ENCODE measurements at regions of chr20 and their contacts with region 1.

Region 1: GRCh38 chr20:37527638-37528441 is at the start of gene BLCAP:
- DNase-seq: peak; percentile 69
- ATAC-seq: peak; percentile 92
- H3K4me3 ChIP-seq: peak within 1 kb of the TSS; percentile 89
- H3K27ac ChIP-seq: peak within 1 kb of the TSS; percentile 100
- H3K4me1 ChIP-seq: peaks cover 16% of the 10 kb centered on the region
- H3K27me3 ChIP-seq: no peaks in the 10 kb centered on the region
- CTCF ChIP-seq: no peak
- EP300 ChIP-seq: no peak
- POLR2A ChIP-seq: peak; percentile 98
- RAD21 ChIP-seq: no peak
- polyA plus RNA-seq, gene BLCAP: 24.6 to 37.7 TPM

Region 2: GRCh38 chr20:37392421-37393178 is 135.2 kb before region 1 on chr20:
- CTCF ChIA-PET with region 1: interaction called, 3 read pairs
- POLR2A ChIA-PET with region 1: no interaction called
- RAD21 ChIA-PET with region 1: no interaction called
- SMC1A ChIA-PET with region 1: interaction called, 3 read pairs
- in situ Hi-C with region 1: loop called (anchors 5 kb)
- intact Hi-C with region 1: no loop called
- DNase-seq: no peak
- ATAC-seq: peak; percentile 63
- H3K4me3 ChIP-seq: no peak overlapping the region
- H3K27ac ChIP-seq: no peak overlapping the region
- H3K4me1 ChIP-seq: no peaks in the 10 kb centered on the region
- H3K27me3 ChIP-seq: no peaks in the 10 kb centered on the region
- CTCF ChIP-seq: peak; percentile 25 to 46 (median 31); a peak in 5 of 6 replicates
- EP300 ChIP-seq: no peak
- POLR2A ChIP-seq: 0 out of 2 replicates have a peak, but pooled peaks have one; percentile 19
- RAD21 ChIP-seq: peak; percentile 32; the same call in 1 of the 2 replicates

Region 3: DNA sequence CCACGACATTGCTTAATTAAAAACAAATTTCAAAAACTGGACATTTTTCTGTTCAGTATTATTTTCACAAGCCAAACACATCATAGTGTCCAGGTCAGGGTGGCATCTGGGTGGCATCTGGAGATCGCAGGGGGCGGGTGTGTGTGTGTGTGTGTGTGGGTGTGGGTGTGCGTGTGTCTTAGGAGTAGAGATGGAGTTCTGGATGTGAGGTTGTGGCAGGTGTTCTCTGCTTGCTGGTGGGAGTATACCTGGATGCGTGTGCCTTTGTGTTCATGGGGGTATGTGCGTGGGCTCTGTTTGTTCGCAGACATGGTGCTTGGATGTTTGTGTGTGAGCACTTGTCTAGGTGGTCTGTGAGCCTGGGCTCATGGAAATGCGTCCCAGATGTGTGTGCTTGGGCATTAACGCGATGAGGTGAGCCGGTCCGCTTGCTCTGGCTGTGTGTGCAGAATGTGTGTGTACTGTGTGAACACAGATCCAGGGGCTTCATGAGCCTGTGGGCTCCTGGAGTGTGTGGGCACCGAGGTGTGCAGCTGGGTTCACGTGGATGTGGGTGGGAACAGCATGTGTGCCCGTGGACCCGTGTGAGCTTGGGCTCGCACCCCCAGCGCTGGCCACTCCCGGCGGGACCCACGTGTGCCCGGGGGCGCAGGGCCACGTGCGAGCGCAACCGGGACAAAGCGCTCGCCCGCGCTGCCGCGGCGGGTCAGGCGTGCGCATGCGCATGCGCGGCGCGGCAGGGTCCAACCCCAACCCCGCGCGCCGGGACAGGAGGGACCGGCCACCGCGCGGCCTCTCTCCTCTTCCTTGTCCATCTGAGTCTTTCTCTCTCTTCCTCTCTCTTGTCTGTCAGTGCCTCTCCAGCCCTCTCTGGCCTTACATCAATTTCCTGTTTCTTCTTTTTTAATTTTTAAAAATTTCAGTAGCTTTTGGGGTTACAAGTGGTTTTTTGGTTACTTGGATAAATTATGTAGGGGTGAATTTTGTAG is 121.5 kb before region 1 on chr20:
- CTCF ChIA-PET with region 1: interaction called, 5 read pairs
- POLR2A ChIA-PET with region 1: no interaction called
- RAD21 ChIA-PET with region 1: no interaction called
- SMC1A ChIA-PET with region 1: no interaction called
- in situ Hi-C with region 1: no loop called
- intact Hi-C with region 1: loop called (anchors 2 kb)
- DNase-seq: no peak
- ATAC-seq: peak; percentile 68
- H3K4me3 ChIP-seq: peak overlapping the region; percentile 41; the same call in 1 of the 2 replicates
- H3K27ac ChIP-seq: no peak overlapping the region
- H3K4me1 ChIP-seq: peaks cover 23% of the 10 kb centered on the region
- H3K27me3 ChIP-seq: no peaks in the 10 kb centered on the region
- CTCF ChIP-seq: no peak
- EP300 ChIP-seq: no peak
- POLR2A ChIP-seq: peak; percentile 78
- RAD21 ChIP-seq: no peak

Region 4: DNA sequence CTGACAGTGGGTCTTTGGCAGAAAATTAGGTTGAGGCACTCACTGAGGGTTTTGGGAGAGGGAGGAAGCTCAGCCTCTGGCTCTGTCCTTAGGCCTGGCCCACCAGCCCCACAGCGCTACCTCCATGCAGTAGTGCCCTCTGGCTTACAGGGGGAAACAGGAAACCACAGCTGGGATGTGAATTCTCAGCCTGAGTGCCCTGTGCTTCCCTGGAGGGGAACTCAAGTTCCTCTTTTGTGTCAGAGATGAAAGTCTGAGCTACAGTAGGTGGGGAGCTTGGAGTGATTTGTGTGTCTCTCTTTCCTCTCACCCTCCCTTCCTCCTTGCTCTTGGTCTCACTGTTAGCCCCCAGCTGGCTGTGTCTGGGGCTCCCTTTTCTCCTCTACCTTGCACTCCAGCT is 48.0 kb after region 1 on chr20:
- CTCF ChIA-PET with region 1: no interaction called
- POLR2A ChIA-PET with region 1: no interaction called
- RAD21 ChIA-PET with region 1: no interaction called
- SMC1A ChIA-PET with region 1: no interaction called
- in situ Hi-C with region 1: no loop called
- intact Hi-C with region 1: no loop called
- DNase-seq: peak; percentile 36
- ATAC-seq: peak; percentile 86
- H3K4me3 ChIP-seq: no peak overlapping the region
- H3K27ac ChIP-seq: no peak overlapping the region
- H3K4me1 ChIP-seq: peaks cover 13% of the 10 kb centered on the region
- H3K27me3 ChIP-seq: no peaks in the 10 kb centered on the region; a peak in 1 of 4 replicates
- CTCF ChIP-seq: no peak
- EP300 ChIP-seq: no peak
- POLR2A ChIP-seq: no peak
- RAD21 ChIP-seq: no peak